GM23248 (cell line): ENCODE measurements at regions of chr5 and their contacts with region 1.

Region 1: DNA sequence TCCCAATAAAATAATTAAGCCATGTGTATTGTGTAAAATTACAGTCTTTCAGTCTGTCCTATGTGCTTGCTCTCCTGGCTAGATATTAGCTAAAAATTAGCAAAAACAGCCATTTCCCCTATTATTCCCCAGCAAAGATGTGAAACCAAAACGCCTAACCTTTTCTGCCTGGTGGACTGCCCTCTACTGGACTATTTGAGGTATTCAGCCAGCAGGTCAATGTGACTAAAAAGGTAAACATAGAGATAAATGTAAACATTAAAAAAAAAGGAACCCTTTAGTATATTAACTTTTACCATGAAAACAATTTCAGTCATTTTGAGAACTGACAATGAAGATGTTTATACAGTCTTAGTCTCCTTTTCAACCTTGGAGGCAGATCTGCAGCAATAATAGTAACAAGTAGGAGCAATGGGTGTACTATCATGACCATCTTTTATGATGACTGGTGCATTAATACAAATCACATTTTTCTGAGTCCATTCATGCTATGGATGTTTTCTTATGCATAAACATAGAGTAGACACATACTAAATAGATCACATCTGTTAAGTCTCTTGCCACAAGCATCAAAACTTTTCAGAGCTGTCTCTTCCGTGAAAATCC is 10.1 kb downstream of the ATG12 start:
- DNase-seq: peak; percentile 70
- H3K4me3 ChIP-seq: no peak overlapping the region
- H3K27ac ChIP-seq: no peak overlapping the region
- H3K4me1 ChIP-seq: no peaks in the 10 kb centered on the region
- H3K27me3 ChIP-seq: no peaks in the 10 kb centered on the region

Region 2: GRCh38 chr5:115423541-115423940 is 407.7 kb before region 1 on chr5:
- in situ Hi-C with region 1: no loop called
- DNase-seq: peak; percentile 47
- H3K4me3 ChIP-seq: no peak overlapping the region
- H3K27ac ChIP-seq: no peak overlapping the region
- H3K4me1 ChIP-seq: peaks cover 31% of the 10 kb centered on the region
- H3K27me3 ChIP-seq: no peaks in the 10 kb centered on the region

Region 3: DNA sequence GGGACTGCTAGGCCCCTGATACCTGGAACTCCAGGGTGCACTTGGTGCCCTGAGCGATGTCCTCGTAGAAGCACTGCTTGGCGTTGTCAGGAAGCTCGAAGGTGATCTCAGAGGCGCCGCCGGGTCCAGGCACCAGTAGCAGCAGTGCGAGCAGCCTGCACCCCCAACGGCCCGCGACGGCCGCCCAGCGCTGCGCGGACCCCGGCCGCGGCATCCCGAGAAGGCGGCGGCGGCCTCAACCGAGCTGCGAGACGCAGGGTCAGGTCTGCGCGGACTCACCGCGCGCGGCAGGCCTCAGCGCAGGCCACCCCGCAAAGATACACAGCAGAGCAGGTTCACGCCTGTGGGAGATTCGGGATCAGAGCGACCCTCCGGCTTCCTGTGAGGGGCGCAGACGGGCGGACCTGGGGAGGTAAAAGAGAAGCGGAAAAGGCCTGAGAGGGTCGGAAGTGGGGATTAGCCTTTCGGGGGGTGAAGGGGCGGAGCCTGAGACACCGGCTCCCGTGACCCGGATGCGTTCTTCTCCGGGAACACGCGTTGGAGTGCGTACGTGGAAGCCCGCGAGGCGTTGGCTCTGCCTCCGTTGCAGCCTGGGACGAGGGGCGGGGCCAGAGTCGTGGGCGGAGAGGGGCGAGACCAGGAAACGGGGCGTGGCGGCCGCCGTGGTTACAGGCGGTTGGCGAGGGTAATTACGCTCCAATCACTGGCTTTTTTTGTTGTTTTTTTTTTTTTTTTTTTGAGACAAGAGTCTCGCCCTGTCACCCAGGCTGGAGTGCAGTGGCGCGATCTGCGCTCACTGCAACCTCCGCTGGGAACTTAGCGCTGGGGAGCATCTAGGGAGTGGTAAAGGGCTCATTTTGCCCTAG is 205.5 kb before region 1 on chr5 and contains the start of gene TMED7:
- in situ Hi-C with region 1: loop called (anchors 10 kb)
- DNase-seq: peak; percentile 100
- H3K4me3 ChIP-seq: peak within 1 kb of the TSS; percentile 97
- H3K27ac ChIP-seq: peak within 1 kb of the TSS; percentile 96
- H3K4me1 ChIP-seq: peaks cover 22% of the 10 kb centered on the region
- H3K27me3 ChIP-seq: no peaks in the 10 kb centered on the region
- total RNA-seq, gene TMED7: 152 and 163 TPM in 2 replicates